ENCODE measurements at regions of chr17 and their contacts with region 1.

Region 1: GRCh38 chr17:76182016-76182764 is 41.1 kb upstream of the FOXJ1 start:
- DNase-seq: peak; percentile 98
- ATAC-seq: peak; percentile 87
- H3K4me3 Mint-ChIP-seq: no peak overlapping the region
- H3K27ac Mint-ChIP-seq: peak overlapping the region; percentile 94
- H3K4me1 Mint-ChIP-seq: peaks cover 59% of the 10 kb centered on the region
- H3K27me3 Mint-ChIP-seq: no peaks in the 10 kb centered on the region

Region 2: DNA sequence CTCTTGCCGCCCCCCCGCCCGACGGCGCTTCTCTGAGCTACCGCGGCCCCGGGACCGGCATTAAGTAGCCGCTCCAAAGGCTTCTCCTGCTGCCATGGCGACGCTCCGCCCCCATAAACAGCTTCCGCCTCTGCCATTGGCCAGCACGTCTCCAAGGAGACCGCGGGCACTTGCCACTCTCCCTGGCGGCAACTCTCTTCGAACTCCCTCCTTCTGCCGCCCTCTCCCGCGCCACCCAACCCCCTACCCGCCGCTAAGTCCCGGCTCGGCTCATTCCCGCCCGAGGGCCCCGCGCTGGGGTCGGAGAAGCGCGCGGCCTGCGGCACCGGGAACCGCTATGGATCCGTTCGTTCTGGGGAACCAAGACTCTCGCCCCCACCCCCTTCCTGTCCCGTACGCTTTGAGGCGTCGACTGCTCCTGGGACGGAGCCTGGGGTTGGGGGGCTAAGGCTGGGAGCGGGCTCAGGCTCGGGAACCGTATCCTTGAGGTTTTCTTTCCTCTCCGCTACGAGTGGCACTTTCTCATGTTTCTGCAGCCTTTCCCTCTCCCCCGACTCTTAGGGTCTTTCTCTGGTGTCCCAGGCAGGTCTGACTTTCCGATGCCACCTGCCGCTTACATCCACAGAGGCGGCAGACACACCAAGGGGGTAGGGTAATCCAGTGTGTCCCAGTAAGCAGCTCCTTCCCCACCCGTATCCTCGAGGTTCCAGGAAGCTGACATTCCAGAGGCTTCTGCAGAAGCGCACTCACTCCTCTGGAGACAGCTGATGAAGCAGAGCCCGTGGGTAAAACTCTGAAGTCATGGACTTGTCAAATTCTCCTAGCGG is 40.8 kb before region 1 on chr17 and contains the start of gene FOXJ1:
- CTCF ChIA-PET with region 1: interaction called, 62 read pairs
- DNase-seq: peak; percentile 94
- ATAC-seq: peak; percentile 73
- H3K4me3 Mint-ChIP-seq: peak within 1 kb of the TSS; percentile 67
- H3K27ac Mint-ChIP-seq: no peak within 1 kb of the TSS
- H3K4me1 Mint-ChIP-seq: peaks cover 56% of the 10 kb centered on the region
- H3K27me3 Mint-ChIP-seq: peaks cover 14% of the 10 kb centered on the region
- total RNA-seq, gene FOXJ1: 0.55 TPM in 1 of 2 experiments, not detected in the other

Region 3: GRCh38 chr17:76219670-76220383 is 37.6 kb after region 1 on chr17:
- CTCF ChIA-PET with region 1: no interaction called
- DNase-seq: no peak
- ATAC-seq: no peak
- H3K4me3 Mint-ChIP-seq: no peak overlapping the region
- H3K27ac Mint-ChIP-seq: peak overlapping the region; percentile 24
- H3K4me1 Mint-ChIP-seq: peaks cover 36% of the 10 kb centered on the region
- H3K27me3 Mint-ChIP-seq: no peaks in the 10 kb centered on the region

Region 4: GRCh38 chr17:76240461-76241203 is 58.4 kb after region 1 on chr17 and contains the start of gene RNF157:
- CTCF ChIA-PET with region 1: interaction called, 15 read pairs
- DNase-seq: peak; percentile 70
- ATAC-seq: peak; percentile 94
- H3K4me3 Mint-ChIP-seq: peak within 1 kb of the TSS; percentile 84
- H3K27ac Mint-ChIP-seq: peak within 1 kb of the TSS; percentile 89
- H3K4me1 Mint-ChIP-seq: peaks cover 67% of the 10 kb centered on the region
- H3K27me3 Mint-ChIP-seq: peaks cover 3% of the 10 kb centered on the region
- total RNA-seq, gene RNF157: 73.0 to 148 TPM

Region 5: DNA sequence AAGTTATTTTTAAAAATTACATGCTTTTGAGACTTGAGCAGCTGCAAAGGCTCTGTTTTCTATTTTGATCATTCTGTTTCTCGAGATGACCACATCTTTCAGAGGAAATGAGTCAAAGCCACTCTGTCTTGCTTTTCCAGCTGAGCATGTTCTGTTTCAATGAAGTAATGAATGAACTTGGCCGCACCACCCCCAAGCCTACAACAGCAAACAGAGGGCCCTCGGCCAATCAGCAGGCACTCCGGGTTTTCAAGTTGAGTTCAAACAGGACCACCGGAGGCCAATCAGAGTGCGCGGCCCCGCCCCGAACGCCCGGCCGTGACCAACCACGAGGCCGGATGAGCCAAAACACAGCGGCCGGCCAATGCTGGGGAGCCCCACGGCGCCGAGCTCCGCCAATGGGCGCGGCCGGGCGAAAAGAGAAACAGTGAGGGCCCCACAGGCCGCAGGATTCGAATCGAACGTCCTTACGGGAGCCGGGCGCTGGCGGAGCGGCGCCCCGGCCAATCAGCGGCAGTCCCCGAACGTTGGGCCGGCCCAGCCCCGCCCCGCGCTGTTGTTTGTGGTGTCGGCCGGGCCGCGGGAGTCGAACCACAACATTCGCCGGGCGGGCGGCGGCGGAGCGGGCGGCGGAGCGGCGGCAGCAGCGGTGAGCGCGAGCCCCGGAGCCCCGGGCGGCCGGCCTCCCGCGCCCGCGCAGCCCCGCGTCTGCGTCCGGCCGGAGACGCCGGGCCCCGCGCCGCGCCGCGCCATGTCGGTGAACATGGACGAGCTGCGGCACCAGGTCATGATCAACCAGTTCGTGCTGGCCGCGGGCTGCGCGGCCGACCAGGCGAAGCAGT is 82.8 kb after region 1 on chr17 and contains the start of gene UBALD2:
- CTCF ChIA-PET with region 1: interaction called, 16 read pairs
- DNase-seq: peak; percentile 100
- ATAC-seq: peak; percentile 82
- H3K4me3 Mint-ChIP-seq: peak within 1 kb of the TSS; percentile 92
- H3K27ac Mint-ChIP-seq: peak within 1 kb of the TSS; percentile 99
- H3K4me1 Mint-ChIP-seq: peaks cover 54% of the 10 kb centered on the region
- H3K27me3 Mint-ChIP-seq: no peaks in the 10 kb centered on the region
- total RNA-seq, gene UBALD2: 260 to 406 TPM

Measured in activated CD8-positive, alpha-beta memory T cell treated with anti-CD3 and anti-CD28 coated beads, Interleukin-2, amount 10 ng/mL, durations not matched to agents 7 days and 5 days (primary cell).